Left colon (tissue), 2 donors: ENCODE measurements at regions of chr17 and their contacts with region 1.

Region 1: GRCh38 chr17:44932496-44933097 is 15.0 kb downstream of the KIF18B start:
- DNase-seq: peak in 1 of 2 donors; percentile 12
- ATAC-seq: no peak

Region 2: GRCh38 chr17:44708401-44709181 is 224.0 kb before region 1 on chr17 and contains the start of gene DBF4B:
- intact Hi-C with region 1: no loop called
- DNase-seq: peak; percentile 81 to 85
- ATAC-seq: peak; percentile 97
- total RNA-seq, gene DBF4B: 2.5 to 5.2 TPM

Region 3: GRCh38 chr17:44864866-44865660 is 67.5 kb before region 1 on chr17:
- intact Hi-C with region 1: no loop called
- DNase-seq: peak; percentile 49 to 70
- ATAC-seq: peak; percentile 83

Region 4: DNA sequence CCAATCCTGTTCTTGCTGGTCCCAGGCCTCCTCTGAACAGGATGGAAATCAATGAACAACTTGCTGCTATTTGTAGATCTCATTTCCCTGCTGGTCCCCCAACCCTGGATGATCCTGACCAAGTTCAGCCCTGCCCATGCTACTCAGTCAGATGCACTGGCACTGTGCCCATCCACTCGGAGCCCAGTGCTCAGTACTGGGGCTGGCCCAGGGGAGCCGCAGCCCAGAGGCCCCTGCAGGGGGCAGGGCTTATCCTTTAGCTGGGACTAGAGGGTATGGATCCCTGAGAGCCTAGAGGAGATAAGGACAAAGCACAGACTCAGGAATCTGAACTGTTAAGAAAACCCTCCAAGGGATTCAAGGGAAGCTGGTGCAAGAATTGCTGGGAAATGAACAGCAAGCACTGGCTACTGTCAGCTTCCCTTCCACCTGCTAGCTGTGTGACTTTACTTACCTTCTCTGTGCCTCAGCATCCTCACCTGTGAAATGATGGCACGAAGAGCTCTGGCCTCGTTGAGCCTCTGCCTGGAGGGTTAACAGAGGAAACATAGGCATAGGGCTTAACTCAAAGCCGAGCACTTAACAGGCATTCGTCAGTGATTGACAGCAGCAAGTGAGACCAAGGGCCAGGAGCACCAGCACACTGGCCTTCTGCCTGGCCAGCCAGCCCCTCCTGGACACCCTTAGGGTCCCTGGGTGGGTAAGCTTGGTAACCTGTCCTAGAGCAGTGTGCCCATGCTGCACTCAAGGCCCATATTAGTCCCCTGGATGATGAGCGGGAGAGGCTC is 65.3 kb after region 1 on chr17:
- intact Hi-C with region 1: loop called in 1 of 2 experiments (anchors 10 kb)
- DNase-seq: no peak
- ATAC-seq: no peak

Region 5: DNA sequence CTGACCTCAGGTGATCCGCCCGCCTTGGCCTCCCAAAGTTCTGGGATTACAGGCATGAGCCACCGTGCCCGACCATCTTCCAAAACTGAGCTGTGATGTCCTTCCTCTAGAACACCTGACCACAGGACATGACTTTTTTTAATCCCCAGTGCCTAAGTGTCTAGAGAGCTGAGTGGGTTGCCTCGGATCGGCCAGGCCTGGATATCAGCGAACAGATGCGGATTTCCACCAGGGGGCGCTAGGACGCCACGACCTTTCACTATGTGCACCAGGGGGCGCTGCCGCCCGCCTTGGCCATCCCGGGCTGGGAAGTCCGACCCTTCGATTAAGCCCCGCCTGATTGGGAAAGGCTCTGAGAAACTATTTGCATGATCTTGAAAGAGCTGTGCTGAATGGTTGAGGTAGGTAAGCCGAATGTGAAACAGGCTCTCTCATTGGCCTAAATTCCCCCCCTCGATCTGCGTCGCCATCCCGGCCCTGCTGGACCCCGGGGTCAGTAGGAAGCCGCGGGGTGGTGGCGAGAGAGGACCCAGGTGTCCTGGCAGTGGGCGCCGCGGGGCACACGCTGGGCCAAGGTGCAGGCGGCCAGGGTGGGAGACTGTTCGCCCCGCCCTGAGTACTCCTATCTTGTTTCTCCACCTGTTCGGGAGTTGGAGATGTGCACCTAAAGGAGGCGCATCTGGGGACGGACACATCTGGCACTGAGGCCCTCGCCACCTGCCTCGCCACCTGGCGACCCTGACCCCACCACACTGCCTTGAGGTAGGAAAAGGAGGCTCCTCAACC is 202.8 kb after region 1 on chr17 and contains the start of gene ACBD4:
- intact Hi-C with region 1: no loop called
- DNase-seq: peak; percentile 94 to 96
- ATAC-seq: peak; percentile 69
- total RNA-seq, gene ACBD4: 22.3 to 22.6 TPM